Activated CD4-positive, alpha-beta memory T cell treated with anti-CD3 and anti-CD28 coated beads for 36 hours (primary cell): ENCODE measurements at regions of chr7 and their contacts with region 1.

Region 1: GRCh38 chr7:141737834-141738591 is at the start of gene SSBP1:
- DNase-seq: peak; percentile 96
- H3K4me3 Mint-ChIP-seq: peak within 1 kb of the TSS; percentile 99
- H3K27ac Mint-ChIP-seq: peak within 1 kb of the TSS; percentile 99
- H3K4me1 Mint-ChIP-seq: peaks cover 35% of the 10 kb centered on the region
- H3K27me3 Mint-ChIP-seq: no peaks in the 10 kb centered on the region
- total RNA-seq, gene SSBP1: 207 to 234 TPM

Region 2: GRCh38 chr7:141477865-141478264 is 260.1 kb before region 1 on chr7:
- CTCF ChIA-PET with region 1: no interaction called
- POLR2A ChIA-PET with region 1: no interaction called
- intact Hi-C with region 1: no loop called
- DNase-seq: no peak
- H3K4me3 Mint-ChIP-seq: no peak overlapping the region
- H3K27ac Mint-ChIP-seq: no peak overlapping the region
- H3K4me1 Mint-ChIP-seq: no peaks in the 10 kb centered on the region
- H3K27me3 Mint-ChIP-seq: peaks cover 12% of the 10 kb centered on the region

Region 3: GRCh38 chr7:141585592-141586510 is 152.2 kb before region 1 on chr7:
- CTCF ChIA-PET with region 1: no interaction called
- POLR2A ChIA-PET with region 1: no interaction called
- intact Hi-C with region 1: loop called (anchors 1 kb)
- DNase-seq: peak; percentile 62
- H3K4me3 Mint-ChIP-seq: no peak overlapping the region
- H3K27ac Mint-ChIP-seq: peak overlapping the region; percentile 65
- H3K4me1 Mint-ChIP-seq: peaks cover 45% of the 10 kb centered on the region
- H3K27me3 Mint-ChIP-seq: no peaks in the 10 kb centered on the region

Region 4: DNA sequence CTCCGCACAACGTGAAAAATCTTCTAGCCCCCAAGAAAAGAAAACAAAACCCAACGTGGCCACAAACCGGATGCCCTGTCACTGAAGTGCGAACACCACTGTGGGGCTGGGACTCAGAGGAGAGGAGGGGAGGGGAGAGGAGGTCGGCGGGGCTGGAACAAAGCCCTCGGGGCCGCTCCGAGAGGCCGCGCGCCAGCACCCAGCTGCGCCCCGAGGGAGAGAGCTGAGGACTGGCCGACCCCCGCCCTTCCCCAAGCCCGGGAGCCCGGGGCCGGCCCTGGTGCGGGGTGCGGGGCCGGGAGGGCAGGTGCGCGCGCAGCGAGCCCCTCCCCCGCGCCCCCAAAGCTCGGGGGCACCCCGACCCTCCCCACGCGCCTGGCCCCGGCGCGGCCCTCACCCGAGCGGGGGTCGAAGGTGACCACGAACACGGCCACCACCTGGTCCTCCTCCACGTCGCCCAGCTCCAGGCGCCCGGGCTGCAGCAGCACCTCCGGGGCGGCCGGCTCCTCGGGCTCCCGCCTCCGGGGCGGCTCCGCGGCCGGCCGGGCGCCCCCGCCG is 36.4 kb before region 1 on chr7:
- CTCF ChIA-PET with region 1: interaction called, 36 read pairs
- POLR2A ChIA-PET with region 1: interaction called, 20 read pairs
- intact Hi-C with region 1: loop called (anchors 1 kb)
- DNase-seq: peak; percentile 79
- H3K4me3 Mint-ChIP-seq: peak overlapping the region; percentile 79
- H3K27ac Mint-ChIP-seq: no peak overlapping the region
- H3K4me1 Mint-ChIP-seq: peaks cover 47% of the 10 kb centered on the region
- H3K27me3 Mint-ChIP-seq: peaks cover 2% of the 10 kb centered on the region

Region 5: GRCh38 chr7:141722529-141722928 is 15.5 kb before region 1 on chr7:
- CTCF ChIA-PET with region 1: interaction called, 24 read pairs
- POLR2A ChIA-PET with region 1: interaction called, 4 read pairs
- intact Hi-C with region 1: no loop called
- DNase-seq: no peak
- H3K4me3 Mint-ChIP-seq: no peak overlapping the region
- H3K27ac Mint-ChIP-seq: no peak overlapping the region
- H3K4me1 Mint-ChIP-seq: no peaks in the 10 kb centered on the region
- H3K27me3 Mint-ChIP-seq: no peaks in the 10 kb centered on the region